B cell (primary cell): ENCODE measurements at regions of chr19 and their contacts with region 1.

Region 1: GRCh38 chr19:51660975-51661600 is 14.5 kb upstream of the SIGLEC14 start:
- DNase-seq: peak; percentile 80
- ATAC-seq: peak; percentile 62
- H3K4me3 ChIP-seq: no peak overlapping the region
- H3K4me3 Mint-ChIP-seq: no peak overlapping the region
- H3K27ac ChIP-seq: no peak overlapping the region
- H3K27ac Mint-ChIP-seq: no peak overlapping the region
- H3K4me1 ChIP-seq: peaks cover 7 to 8% of the 10 kb centered on the region in 2 donors
- H3K4me1 Mint-ChIP-seq: peaks cover 9% of the 10 kb centered on the region
- H3K27me3 ChIP-seq: peaks cover 0 to 28% (median 18%) of the 10 kb centered on the region in 4 experiments
- H3K27me3 Mint-ChIP-seq: peaks cover 38% of the 10 kb centered on the region
- CTCF ChIP-seq: peak; percentile 75

Region 2: GRCh38 chr19:51393959-51394836 is 266.9 kb before region 1 on chr19:
- CTCF ChIA-PET with region 1: interaction called, 10 read pairs
- POLR2A ChIA-PET with region 1: no interaction called
- intact Hi-C with region 1: loop called (anchors 1 kb)
- DNase-seq: peak; percentile 95
- ATAC-seq: peak; percentile 92
- H3K4me3 ChIP-seq: peak overlapping the region; percentile 43 to 74 (median 62)
- H3K4me3 Mint-ChIP-seq: peak overlapping the region; percentile 85
- H3K27ac ChIP-seq: peak overlapping the region; percentile 63 to 73
- H3K27ac Mint-ChIP-seq: peak overlapping the region; percentile 78
- H3K4me1 ChIP-seq: peaks cover 22 to 33% of the 10 kb centered on the region in 2 donors
- H3K4me1 Mint-ChIP-seq: peaks cover 30% of the 10 kb centered on the region
- H3K27me3 ChIP-seq: peaks cover 0 to 4% (median 0%) of the 10 kb centered on the region in 4 experiments
- H3K27me3 Mint-ChIP-seq: no peaks in the 10 kb centered on the region
- CTCF ChIP-seq: peak; percentile 13

Region 3: DNA sequence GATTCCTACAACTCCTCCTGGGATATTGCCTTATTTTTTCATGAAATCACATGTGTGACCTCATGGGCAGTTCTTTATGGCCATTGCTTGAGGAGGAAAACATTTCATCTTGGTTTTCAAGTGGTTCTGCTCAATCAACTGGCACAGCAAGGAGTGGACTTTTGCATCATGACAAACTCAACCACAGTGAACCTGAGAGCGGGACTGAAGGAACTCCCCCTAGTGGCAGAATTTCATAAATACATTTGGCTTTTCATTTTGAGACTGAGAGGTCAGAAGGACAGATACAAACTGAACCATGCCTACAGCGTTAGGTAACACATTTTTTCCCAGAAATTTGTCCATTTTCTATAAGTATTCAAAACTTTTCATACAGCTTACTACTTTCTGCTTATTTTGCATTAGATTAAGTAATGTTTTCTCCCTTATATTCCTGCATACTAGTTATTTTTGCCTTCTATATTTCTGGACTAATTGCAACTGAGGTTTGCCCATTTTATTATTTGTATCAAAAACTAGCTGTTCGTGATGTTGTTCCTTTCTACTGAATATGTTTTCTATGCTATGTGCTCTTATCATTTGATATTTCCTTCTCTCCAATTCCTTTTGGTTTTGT is 146.1 kb before region 1 on chr19:
- CTCF ChIA-PET with region 1: interaction called, 102 read pairs
- POLR2A ChIA-PET with region 1: no interaction called
- intact Hi-C with region 1: loop called (anchors 2 kb)
- DNase-seq: peak; percentile 74
- ATAC-seq: peak; percentile 56
- H3K4me3 ChIP-seq: no peak overlapping the region
- H3K4me3 Mint-ChIP-seq: no peak overlapping the region
- H3K27ac ChIP-seq: no peak overlapping the region
- H3K27ac Mint-ChIP-seq: no peak overlapping the region
- H3K4me1 ChIP-seq: peaks cover 6 to 7% of the 10 kb centered on the region in 2 donors
- H3K4me1 Mint-ChIP-seq: peaks cover 7% of the 10 kb centered on the region
- H3K27me3 ChIP-seq: peaks cover 0 to 4% (median 0%) of the 10 kb centered on the region in 4 experiments
- H3K27me3 Mint-ChIP-seq: peaks cover 5% of the 10 kb centered on the region
- CTCF ChIP-seq: peak; percentile 89

Region 4: DNA sequence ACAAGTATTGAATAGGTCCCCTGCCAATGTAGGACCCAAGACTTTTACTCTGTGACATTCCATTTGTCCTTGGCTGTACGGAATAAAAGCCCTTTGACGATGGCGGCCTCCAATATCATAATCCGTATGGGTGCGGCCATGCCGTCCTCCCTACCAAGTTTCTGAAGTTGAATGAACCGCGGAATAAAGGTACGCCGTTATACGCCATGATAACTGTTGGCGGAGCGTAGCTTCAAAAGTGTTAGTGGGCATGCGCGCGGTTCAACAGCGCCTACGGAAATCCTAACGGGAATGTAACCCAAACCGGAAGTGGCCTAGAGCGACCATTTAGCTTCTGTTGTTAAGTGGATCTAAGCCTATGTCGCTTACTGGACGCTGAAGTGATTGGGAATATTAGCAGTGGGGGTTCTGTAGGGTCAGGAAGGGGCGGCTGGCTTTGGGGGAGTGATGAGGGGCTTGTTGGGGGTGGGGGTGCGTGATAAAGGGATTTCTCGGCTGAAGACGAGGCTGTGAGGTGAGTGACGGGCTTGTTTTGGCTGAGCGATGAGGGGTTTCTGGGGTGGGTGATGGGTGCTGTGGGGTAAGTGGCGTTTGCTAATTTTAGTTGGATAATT is 90.0 kb before region 1 on chr19 and contains the start of gene ZNF175:
- CTCF ChIA-PET with region 1: interaction called, 12 read pairs
- POLR2A ChIA-PET with region 1: no interaction called
- intact Hi-C with region 1: loop called (anchors 2 kb)
- DNase-seq: peak; percentile 91
- ATAC-seq: peak; percentile 96
- H3K4me3 ChIP-seq: peak within 1 kb of the TSS; percentile 59 to 84 (median 81)
- H3K4me3 Mint-ChIP-seq: peak within 1 kb of the TSS; percentile 88
- H3K27ac ChIP-seq: peak within 1 kb of the TSS in 1 of 2 donors; percentile 59
- H3K27ac Mint-ChIP-seq: peak within 1 kb of the TSS; percentile 83
- H3K4me1 ChIP-seq: peaks cover 19% of the 10 kb centered on the region in 2 donors
- H3K4me1 Mint-ChIP-seq: peaks cover 38% of the 10 kb centered on the region
- H3K27me3 ChIP-seq: no peaks in the 10 kb centered on the region
- H3K27me3 Mint-ChIP-seq: no peaks in the 10 kb centered on the region
- CTCF ChIP-seq: no peak
- total RNA-seq, gene ZNF175: 31.3 and 33.0 TPM in 2 replicates

Region 5: GRCh38 chr19:51615949-51616348 is 45.1 kb before region 1 on chr19:
- CTCF ChIA-PET with region 1: interaction called, 25 read pairs
- POLR2A ChIA-PET with region 1: no interaction called
- intact Hi-C with region 1: no loop called
- DNase-seq: no peak
- ATAC-seq: no peak
- H3K4me3 ChIP-seq: no peak overlapping the region
- H3K4me3 Mint-ChIP-seq: no peak overlapping the region
- H3K27ac ChIP-seq: no peak overlapping the region
- H3K27ac Mint-ChIP-seq: no peak overlapping the region
- H3K4me1 ChIP-seq: peaks cover 13 to 14% of the 10 kb centered on the region in 2 donors
- H3K4me1 Mint-ChIP-seq: peaks cover 31% of the 10 kb centered on the region
- H3K27me3 ChIP-seq: no peaks in the 10 kb centered on the region
- H3K27me3 Mint-ChIP-seq: no peaks in the 10 kb centered on the region
- CTCF ChIP-seq: no peak

Region 6: GRCh38 chr19:51698241-51698651 is 37.2 kb after region 1 on chr19:
- CTCF ChIA-PET with region 1: no interaction called
- POLR2A ChIA-PET with region 1: no interaction called
- intact Hi-C with region 1: no loop called
- DNase-seq: no peak
- ATAC-seq: no peak
- H3K4me3 ChIP-seq: no peak overlapping the region
- H3K4me3 Mint-ChIP-seq: no peak overlapping the region
- H3K27ac ChIP-seq: no peak overlapping the region
- H3K27ac Mint-ChIP-seq: no peak overlapping the region
- H3K4me1 ChIP-seq: peaks cover 12% of the 10 kb centered on the region in 2 donors
- H3K4me1 Mint-ChIP-seq: peaks cover 13% of the 10 kb centered on the region
- H3K27me3 ChIP-seq: peaks cover 0 to 37% (median 7%) of the 10 kb centered on the region in 4 experiments
- H3K27me3 Mint-ChIP-seq: peaks cover 45% of the 10 kb centered on the region
- CTCF ChIP-seq: no peak

Region 7: GRCh38 chr19:51777570-51778462 is 116.7 kb after region 1 on chr19:
- CTCF ChIA-PET with region 1: interaction called, 23 read pairs
- POLR2A ChIA-PET with region 1: no interaction called
- intact Hi-C with region 1: no loop called
- DNase-seq: peak; percentile 75
- ATAC-seq: peak; percentile 51
- H3K4me3 ChIP-seq: no peak overlapping the region
- H3K4me3 Mint-ChIP-seq: no peak overlapping the region
- H3K27ac ChIP-seq: no peak overlapping the region
- H3K27ac Mint-ChIP-seq: no peak overlapping the region
- H3K4me1 ChIP-seq: peaks cover 0 to 6% of the 10 kb centered on the region in 2 donors
- H3K4me1 Mint-ChIP-seq: peaks cover 2% of the 10 kb centered on the region
- H3K27me3 ChIP-seq: peaks cover 0 to 13% (median 5%) of the 10 kb centered on the region in 4 experiments
- H3K27me3 Mint-ChIP-seq: peaks cover 62% of the 10 kb centered on the region
- CTCF ChIP-seq: peak; percentile 80